ENCODE measurements at regions of chr11 and their contacts with region 1.

Region 1: DNA sequence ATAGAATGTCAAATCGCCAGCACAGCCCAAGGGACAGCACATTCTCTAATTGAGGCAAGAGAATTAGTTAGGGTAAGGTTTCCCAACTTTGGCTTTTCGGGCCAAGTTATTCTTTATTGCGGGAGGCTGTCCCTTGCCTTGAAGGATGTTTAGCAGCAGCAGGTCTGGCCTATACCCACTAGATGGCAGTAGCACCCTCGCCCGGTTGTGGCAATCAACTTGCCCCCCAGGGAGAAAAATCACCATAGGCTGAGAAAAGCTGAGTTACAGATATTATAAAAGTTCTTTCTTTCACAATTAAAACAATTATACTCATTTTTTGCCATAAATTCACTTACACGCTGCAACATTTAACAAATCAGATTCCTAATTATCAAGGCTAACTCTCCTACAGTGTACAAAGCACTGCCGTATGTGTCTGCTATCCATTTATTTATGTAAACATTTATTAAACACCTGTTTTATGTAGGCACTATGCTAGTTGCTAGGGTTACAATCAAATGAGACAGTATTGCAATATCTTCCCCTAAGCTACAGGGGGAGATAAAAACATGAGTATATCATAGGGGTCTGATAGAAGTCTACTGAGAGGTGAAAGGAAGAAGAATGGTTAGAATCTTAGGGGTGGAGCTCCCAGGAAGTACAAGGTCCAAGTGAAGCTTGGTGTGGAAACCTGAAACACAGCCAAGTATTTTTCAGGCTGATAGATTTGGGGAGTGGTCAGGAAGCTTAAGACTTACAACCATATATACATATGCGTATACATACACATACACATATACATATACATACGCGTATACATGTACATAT is 452.3 kb downstream of the RAB38 start:
- DNase-seq: peak; percentile 64
- ATAC-seq: peak; percentile 72
- H3K4me3 ChIP-seq: 0 out of 2 replicates have a peak overlapping the region, but pooled peaks have one; percentile 8
- H3K27ac ChIP-seq: no peak overlapping the region
- H3K4me1 ChIP-seq: peaks cover 11% of the 10 kb centered on the region
- H3K27me3 ChIP-seq: no peaks in the 10 kb centered on the region
- CTCF ChIP-seq: peak; percentile 94

Region 2: DNA sequence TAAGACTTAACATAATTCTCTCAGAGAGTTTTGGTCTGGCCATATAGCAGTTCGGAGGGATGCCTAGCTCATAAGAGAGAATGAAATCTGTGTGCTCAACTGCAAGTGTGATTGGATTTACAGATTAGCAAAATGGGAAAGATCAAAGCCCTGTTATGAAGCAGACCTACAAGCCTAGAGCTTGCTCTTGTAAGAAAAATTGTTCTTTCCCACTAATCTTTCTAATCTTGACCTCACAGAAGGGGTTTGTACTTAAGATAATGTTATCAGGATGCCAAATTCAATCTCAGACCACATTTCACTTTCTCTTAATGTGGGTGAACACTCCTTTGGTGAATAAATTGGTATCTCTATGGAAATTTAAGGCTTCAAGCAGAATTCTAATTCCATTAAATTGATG is 185.1 kb after region 1 on chr11:
- CTCF ChIA-PET with region 1: no interaction called
- POLR2A ChIA-PET with region 1: no interaction called
- intact Hi-C with region 1: no loop called
- DNase-seq: no peak
- ATAC-seq: no peak
- H3K4me3 ChIP-seq: no peak overlapping the region
- H3K27ac ChIP-seq: no peak overlapping the region
- H3K4me1 ChIP-seq: no peaks in the 10 kb centered on the region
- H3K27me3 ChIP-seq: no peaks in the 10 kb centered on the region; the same call in 1 of the 2 replicates
- CTCF ChIP-seq: no peak

Region 3: GRCh38 chr11:88139865-88140264 is 416.9 kb after region 1 on chr11:
- CTCF ChIA-PET with region 1: no interaction called
- POLR2A ChIA-PET with region 1: no interaction called
- intact Hi-C with region 1: no loop called
- DNase-seq: no peak
- ATAC-seq: no peak
- H3K4me3 ChIP-seq: no peak overlapping the region
- H3K27ac ChIP-seq: no peak overlapping the region
- H3K4me1 ChIP-seq: no peaks in the 10 kb centered on the region
- H3K27me3 ChIP-seq: no peaks in the 10 kb centered on the region
- CTCF ChIP-seq: no peak

Region 4: DNA sequence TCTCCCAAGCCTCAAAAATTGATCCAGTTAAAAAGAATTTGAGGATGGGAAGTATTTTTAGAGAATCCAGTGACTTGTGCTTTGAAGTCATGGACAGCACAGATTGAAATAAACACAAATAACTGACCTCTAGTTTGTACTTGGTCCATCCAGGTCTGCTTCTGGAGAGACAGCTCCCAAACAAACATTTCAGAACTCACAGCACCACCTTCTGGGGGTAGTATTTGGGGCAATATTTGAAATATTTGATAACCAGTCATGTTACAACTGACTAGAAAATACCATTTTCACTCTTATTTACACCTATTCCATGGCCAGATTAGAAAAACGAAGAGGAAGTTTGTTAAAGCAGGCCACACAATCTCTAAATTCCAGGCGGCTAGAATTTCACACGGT is 558.4 kb after region 1 on chr11:
- CTCF ChIA-PET with region 1: no interaction called
- POLR2A ChIA-PET with region 1: no interaction called
- intact Hi-C with region 1: loop called (anchors 5 kb)
- DNase-seq: peak; percentile 44
- ATAC-seq: peak; percentile 31; the same call in 1 of the 2 replicates
- H3K4me3 ChIP-seq: no peak overlapping the region
- H3K27ac ChIP-seq: no peak overlapping the region
- H3K4me1 ChIP-seq: 0 out of 2 replicates have a peak, but pooled peaks cover 4% of the 10 kb centered on the region
- H3K27me3 ChIP-seq: no peaks in the 10 kb centered on the region
- CTCF ChIP-seq: peak; percentile 63